ENCODE measurements at regions of chr18 and their contacts with region 1.

Region 1: GRCh38 chr18:55500316-55501086 is 87.5 kb downstream of the TCF4 start:
- DNase-seq: peak; percentile 92
- H3K4me3 ChIP-seq: peak overlapping the region in 1 of 3 experiments; percentile 2
- H3K27ac ChIP-seq: peak overlapping the region; percentile 80
- H3K4me1 ChIP-seq: peaks cover 53% of the 10 kb centered on the region
- H3K27me3 ChIP-seq: no peaks in the 10 kb centered on the region
- CTCF ChIP-seq: no peak
- POLR2A ChIP-seq: peak; percentile 37

Region 2: GRCh38 chr18:55477860-55478581 is 22.5 kb before region 1 on chr18:
- CTCF ChIA-PET with region 1: interaction called, 5 read pairs
- POLR2A ChIA-PET with region 1: no interaction called
- dilution Hi-C with region 1: no loop called
- intact Hi-C with region 1: loop called (anchors 2 kb)
- DNase-seq: no peak
- H3K4me3 ChIP-seq: peak overlapping the region; percentile 31 to 91 (median 80)
- H3K27ac ChIP-seq: peak overlapping the region; percentile 95
- H3K4me1 ChIP-seq: peaks cover 35% of the 10 kb centered on the region
- H3K27me3 ChIP-seq: no peaks in the 10 kb centered on the region
- CTCF ChIP-seq: no peak
- POLR2A ChIP-seq: no peak